B cell (primary cell): ENCODE measurements at regions of chr1 and their contacts with region 1.

Region 1: DNA sequence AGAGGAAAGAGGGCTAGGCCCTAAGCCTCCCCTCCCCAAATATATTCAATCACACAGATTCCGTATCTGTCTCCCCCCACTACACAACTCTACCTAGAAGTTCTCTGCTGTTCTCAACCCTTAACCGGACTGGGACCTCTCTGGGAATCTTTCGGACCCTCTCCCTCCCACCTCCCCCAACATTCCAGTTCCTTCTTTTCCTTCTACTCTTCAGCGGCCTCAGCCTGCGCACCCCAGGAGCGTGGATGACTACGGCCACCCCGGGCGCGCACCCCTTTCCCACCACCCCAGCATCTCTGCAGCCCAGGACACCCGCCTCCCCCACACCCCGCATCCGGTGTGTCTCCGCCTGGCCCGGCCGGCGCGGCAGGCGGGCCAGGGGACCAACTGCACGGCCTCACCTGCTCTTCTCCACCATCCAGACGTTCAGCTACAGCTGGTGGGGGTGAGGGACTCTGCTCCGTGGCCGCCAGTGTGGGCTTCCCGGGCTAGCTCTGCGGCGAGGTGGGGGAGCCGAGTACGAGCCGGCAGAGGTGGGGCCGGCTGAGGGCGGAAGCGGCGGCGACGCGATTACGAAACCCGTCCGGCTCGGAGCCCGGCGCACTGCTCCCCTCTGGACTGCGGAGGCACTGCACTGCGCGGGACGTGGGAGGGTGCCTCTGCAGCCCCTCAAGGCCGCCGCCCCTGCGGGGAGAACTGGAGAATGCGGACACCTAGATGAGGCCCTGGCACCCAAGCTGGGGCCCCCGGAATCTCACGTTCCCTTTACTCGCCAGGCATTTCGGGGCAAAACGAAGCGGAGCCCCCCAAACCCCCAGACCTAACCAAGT is at the start of gene CDC42SE1:
- DNase-seq: peak; percentile 92
- ATAC-seq: peak; percentile 85
- H3K4me3 ChIP-seq: peak within 1 kb of the TSS; percentile 87 to 99 (median 97)
- H3K4me3 Mint-ChIP-seq: peak within 1 kb of the TSS; percentile 99
- H3K27ac ChIP-seq: peak within 1 kb of the TSS; percentile 76 to 95
- H3K27ac Mint-ChIP-seq: peak within 1 kb of the TSS; percentile 94
- H3K4me1 ChIP-seq: peaks cover 42 to 46% of the 10 kb centered on the region in 2 donors
- H3K4me1 Mint-ChIP-seq: peaks cover 51% of the 10 kb centered on the region
- H3K27me3 ChIP-seq: no peaks in the 10 kb centered on the region
- H3K27me3 Mint-ChIP-seq: no peaks in the 10 kb centered on the region
- CTCF ChIP-seq: peak; percentile 85
- total RNA-seq, gene CDC42SE1: 230 and 238 TPM in 2 replicates

Region 2: GRCh38 chr1:150876119-150876454 is 183.2 kb before region 1 on chr1:
- CTCF ChIA-PET with region 1: no interaction called
- POLR2A ChIA-PET with region 1: no interaction called
- intact Hi-C with region 1: loop called (anchors 2 kb)
- DNase-seq: no peak
- ATAC-seq: no peak
- H3K4me3 ChIP-seq: peak overlapping the region; percentile 72 to 87 (median 84)
- H3K4me3 Mint-ChIP-seq: peak overlapping the region; percentile 88
- H3K27ac ChIP-seq: peak overlapping the region; percentile 64 to 80
- H3K27ac Mint-ChIP-seq: peak overlapping the region; percentile 90
- H3K4me1 ChIP-seq: peaks cover 20% of the 10 kb centered on the region in 2 donors
- H3K4me1 Mint-ChIP-seq: peaks cover 32% of the 10 kb centered on the region
- H3K27me3 ChIP-seq: no peaks in the 10 kb centered on the region
- H3K27me3 Mint-ChIP-seq: no peaks in the 10 kb centered on the region
- CTCF ChIP-seq: no peak

Region 3: DNA sequence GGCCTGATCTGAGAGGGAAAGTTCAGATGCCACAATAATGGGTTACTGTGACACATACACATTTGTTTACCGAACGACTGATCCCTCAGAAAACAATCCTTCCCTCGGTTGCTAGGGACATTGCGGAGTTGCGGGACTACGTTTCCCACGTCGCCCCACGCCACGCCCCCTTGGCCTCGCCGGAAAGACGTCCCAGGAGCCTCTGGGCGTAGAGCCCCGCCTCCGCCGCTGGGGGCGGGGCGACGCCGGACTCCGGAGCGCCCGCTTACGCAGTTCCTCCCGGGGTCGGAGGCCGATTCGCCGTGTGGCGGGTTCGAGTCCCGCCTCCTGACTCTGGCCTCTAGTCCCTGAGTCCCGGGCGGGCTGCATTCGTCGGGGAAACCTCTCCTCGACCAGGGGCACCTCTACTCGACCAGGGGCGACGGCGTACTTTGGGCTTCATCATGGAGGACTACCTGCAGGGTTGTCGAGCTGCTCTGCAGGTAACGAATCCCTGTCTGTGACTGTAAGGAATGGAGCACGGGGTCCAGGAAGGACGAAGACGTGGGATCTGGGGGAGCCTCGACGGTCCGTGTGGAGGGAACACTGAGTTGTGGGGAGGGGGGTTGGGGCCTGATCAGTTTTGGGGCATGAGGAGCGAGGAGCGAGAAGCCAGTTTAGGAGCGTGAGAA is 51.0 kb before region 1 on chr1 and contains the start of gene PRUNE1:
- CTCF ChIA-PET with region 1: interaction called, 8 read pairs
- POLR2A ChIA-PET with region 1: interaction called, 4 read pairs
- intact Hi-C with region 1: loop called (anchors 1 kb)
- DNase-seq: peak; percentile 98
- ATAC-seq: peak; percentile 97
- H3K4me3 ChIP-seq: peak within 1 kb of the TSS; percentile 74 to 98 (median 85)
- H3K4me3 Mint-ChIP-seq: peak within 1 kb of the TSS; percentile 90
- H3K27ac ChIP-seq: peak within 1 kb of the TSS; percentile 82 to 95
- H3K27ac Mint-ChIP-seq: peak within 1 kb of the TSS; percentile 94
- H3K4me1 ChIP-seq: peaks cover 39 to 55% of the 10 kb centered on the region in 2 donors
- H3K4me1 Mint-ChIP-seq: peaks cover 66% of the 10 kb centered on the region
- H3K27me3 ChIP-seq: no peaks in the 10 kb centered on the region
- H3K27me3 Mint-ChIP-seq: no peaks in the 10 kb centered on the region
- CTCF ChIP-seq: no peak
- total RNA-seq, gene PRUNE1: 20.8 and 21.3 TPM in 2 replicates

Region 4: DNA sequence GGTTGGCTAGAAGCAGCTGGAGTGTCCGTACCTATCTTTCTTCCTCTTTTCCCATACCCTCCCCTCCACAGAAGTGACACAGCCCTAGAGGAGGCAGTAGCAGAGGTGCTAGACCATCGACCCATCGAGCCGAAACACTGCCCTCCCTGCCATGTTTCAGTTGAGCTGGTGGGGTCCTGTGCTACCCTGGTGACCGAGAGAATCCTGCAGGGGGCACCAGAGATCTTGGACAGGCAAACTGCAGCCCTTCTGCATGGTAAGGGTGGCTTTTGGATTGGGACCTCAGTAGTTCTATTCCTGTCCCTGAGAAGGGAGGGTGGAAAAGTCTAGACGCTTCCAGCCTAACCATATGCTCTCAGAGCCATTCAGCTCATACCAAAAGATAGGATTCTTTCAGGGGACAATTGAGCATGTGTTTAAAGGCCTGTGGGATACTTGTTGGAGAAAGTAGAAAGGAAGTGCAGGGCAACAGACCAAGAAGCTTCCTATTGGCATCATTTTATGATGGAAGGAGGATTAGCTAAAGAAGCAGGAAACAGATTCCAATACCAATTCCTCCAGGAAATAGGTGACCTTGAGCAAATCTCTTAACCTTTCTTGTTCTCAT is 34.6 kb before region 1 on chr1:
- CTCF ChIA-PET with region 1: interaction called, 60 read pairs
- POLR2A ChIA-PET with region 1: interaction called, 3 read pairs
- intact Hi-C with region 1: loop called (anchors 1 kb)
- DNase-seq: peak; percentile 86
- ATAC-seq: peak; percentile 98
- H3K4me3 ChIP-seq: no peak overlapping the region
- H3K4me3 Mint-ChIP-seq: no peak overlapping the region
- H3K27ac ChIP-seq: no peak overlapping the region
- H3K27ac Mint-ChIP-seq: peak overlapping the region; percentile 72
- H3K4me1 ChIP-seq: peaks cover 0 to 5% of the 10 kb centered on the region in 2 donors
- H3K4me1 Mint-ChIP-seq: peaks cover 6% of the 10 kb centered on the region
- H3K27me3 ChIP-seq: no peaks in the 10 kb centered on the region
- H3K27me3 Mint-ChIP-seq: no peaks in the 10 kb centered on the region
- CTCF ChIP-seq: peak; percentile 85

Region 5: GRCh38 chr1:151047925-151048645 is 11.2 kb before region 1 on chr1:
- CTCF ChIA-PET with region 1: interaction called, 63 read pairs
- POLR2A ChIA-PET with region 1: interaction called, 29 read pairs
- intact Hi-C with region 1: loop called (anchors 1 kb)
- DNase-seq: peak; percentile 79
- ATAC-seq: peak; percentile 69
- H3K4me3 ChIP-seq: peak overlapping the region; percentile 70 to 97 (median 93)
- H3K4me3 Mint-ChIP-seq: peak overlapping the region; percentile 96
- H3K27ac ChIP-seq: peak overlapping the region; percentile 71 to 75
- H3K27ac Mint-ChIP-seq: peak overlapping the region; percentile 94
- H3K4me1 ChIP-seq: peaks cover 20 to 30% of the 10 kb centered on the region in 2 donors
- H3K4me1 Mint-ChIP-seq: peaks cover 42% of the 10 kb centered on the region
- H3K27me3 ChIP-seq: no peaks in the 10 kb centered on the region
- H3K27me3 Mint-ChIP-seq: no peaks in the 10 kb centered on the region
- CTCF ChIP-seq: peak; percentile 70

Region 6: GRCh38 chr1:151098126-151098525 is 38.8 kb after region 1 on chr1:
- CTCF ChIA-PET with region 1: interaction called, 5 read pairs
- POLR2A ChIA-PET with region 1: no interaction called
- intact Hi-C with region 1: loop called (anchors 2 kb)
- DNase-seq: no peak
- ATAC-seq: no peak
- H3K4me3 ChIP-seq: no peak overlapping the region
- H3K4me3 Mint-ChIP-seq: no peak overlapping the region
- H3K27ac ChIP-seq: no peak overlapping the region
- H3K27ac Mint-ChIP-seq: no peak overlapping the region
- H3K4me1 ChIP-seq: no peaks in the 10 kb centered on the region
- H3K4me1 Mint-ChIP-seq: no peaks in the 10 kb centered on the region
- H3K27me3 ChIP-seq: no peaks in the 10 kb centered on the region
- H3K27me3 Mint-ChIP-seq: no peaks in the 10 kb centered on the region
- CTCF ChIP-seq: no peak

Region 7: GRCh38 chr1:151156515-151156819 is 97.2 kb after region 1 on chr1 and contains the start of gene TNFAIP8L2:
- CTCF ChIA-PET with region 1: interaction called, 6 read pairs
- POLR2A ChIA-PET with region 1: no interaction called
- intact Hi-C with region 1: loop called (anchors 1 kb)
- DNase-seq: peak; percentile 77
- ATAC-seq: peak; percentile 85
- H3K4me3 ChIP-seq: peak within 1 kb of the TSS; percentile 72 to 98 (median 72)
- H3K4me3 Mint-ChIP-seq: peak within 1 kb of the TSS; percentile 99
- H3K27ac ChIP-seq: peak within 1 kb of the TSS; percentile 29 to 79
- H3K27ac Mint-ChIP-seq: peak within 1 kb of the TSS; percentile 97
- H3K4me1 ChIP-seq: peaks cover 30 to 37% of the 10 kb centered on the region in 2 donors
- H3K4me1 Mint-ChIP-seq: peaks cover 41% of the 10 kb centered on the region
- H3K27me3 ChIP-seq: no peaks in the 10 kb centered on the region
- H3K27me3 Mint-ChIP-seq: no peaks in the 10 kb centered on the region
- CTCF ChIP-seq: no peak
- total RNA-seq, gene TNFAIP8L2: 14.9 and 17.6 TPM in 2 replicates

Region 8: DNA sequence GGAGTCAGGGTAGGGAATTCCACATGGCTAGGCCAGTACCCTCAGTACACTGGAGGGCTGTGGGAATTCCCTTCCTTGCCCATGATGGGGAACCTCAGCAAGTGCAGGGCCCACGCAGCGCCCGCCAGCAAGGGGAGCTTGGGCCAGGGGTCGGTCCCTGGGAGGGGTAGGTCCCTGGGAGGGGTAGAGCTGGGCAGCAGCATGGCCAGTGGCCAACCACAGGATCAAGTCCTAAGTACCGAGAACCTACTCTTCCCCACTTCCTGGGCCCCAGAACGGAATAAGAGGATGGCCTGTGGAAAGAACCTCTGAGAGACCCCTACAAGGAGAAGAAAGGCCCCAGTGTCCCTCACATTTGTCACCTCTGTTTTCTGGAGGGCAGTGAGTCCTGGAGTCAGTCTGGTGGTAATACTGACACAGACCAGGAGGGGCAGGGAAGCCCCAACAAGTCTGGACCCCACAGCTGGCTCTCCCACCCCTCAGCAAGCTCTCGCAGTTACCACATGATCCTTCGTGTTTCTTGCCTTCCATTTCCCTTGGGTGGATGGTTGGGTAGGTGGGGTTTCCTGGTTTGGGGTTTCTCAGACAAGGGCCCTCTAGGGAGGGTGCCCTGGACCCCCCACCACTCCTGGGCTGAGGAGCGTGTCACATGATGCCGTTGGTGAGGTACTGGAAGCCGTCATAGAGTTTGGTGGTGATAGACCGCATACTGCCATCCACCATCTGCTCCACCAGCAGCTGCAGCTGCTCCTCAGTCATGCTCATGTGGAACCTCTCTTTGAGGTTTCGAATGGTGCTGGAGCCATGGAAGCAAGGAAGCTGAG is 233.1 kb after region 1 on chr1:
- CTCF ChIA-PET with region 1: no interaction called
- POLR2A ChIA-PET with region 1: no interaction called
- intact Hi-C with region 1: no loop called
- DNase-seq: peak; percentile 49
- ATAC-seq: peak; percentile 41
- H3K4me3 ChIP-seq: no peak overlapping the region
- H3K4me3 Mint-ChIP-seq: no peak overlapping the region
- H3K27ac ChIP-seq: peak overlapping the region; percentile 24 to 66
- H3K27ac Mint-ChIP-seq: peak overlapping the region; percentile 74
- H3K4me1 ChIP-seq: peaks cover 0 to 4% of the 10 kb centered on the region in 2 donors
- H3K4me1 Mint-ChIP-seq: peaks cover 16% of the 10 kb centered on the region
- H3K27me3 ChIP-seq: no peaks in the 10 kb centered on the region
- H3K27me3 Mint-ChIP-seq: no peaks in the 10 kb centered on the region
- CTCF ChIP-seq: peak; percentile 23